ENCODE measurements at regions of chr1 and their contacts with region 1.

Region 1: DNA sequence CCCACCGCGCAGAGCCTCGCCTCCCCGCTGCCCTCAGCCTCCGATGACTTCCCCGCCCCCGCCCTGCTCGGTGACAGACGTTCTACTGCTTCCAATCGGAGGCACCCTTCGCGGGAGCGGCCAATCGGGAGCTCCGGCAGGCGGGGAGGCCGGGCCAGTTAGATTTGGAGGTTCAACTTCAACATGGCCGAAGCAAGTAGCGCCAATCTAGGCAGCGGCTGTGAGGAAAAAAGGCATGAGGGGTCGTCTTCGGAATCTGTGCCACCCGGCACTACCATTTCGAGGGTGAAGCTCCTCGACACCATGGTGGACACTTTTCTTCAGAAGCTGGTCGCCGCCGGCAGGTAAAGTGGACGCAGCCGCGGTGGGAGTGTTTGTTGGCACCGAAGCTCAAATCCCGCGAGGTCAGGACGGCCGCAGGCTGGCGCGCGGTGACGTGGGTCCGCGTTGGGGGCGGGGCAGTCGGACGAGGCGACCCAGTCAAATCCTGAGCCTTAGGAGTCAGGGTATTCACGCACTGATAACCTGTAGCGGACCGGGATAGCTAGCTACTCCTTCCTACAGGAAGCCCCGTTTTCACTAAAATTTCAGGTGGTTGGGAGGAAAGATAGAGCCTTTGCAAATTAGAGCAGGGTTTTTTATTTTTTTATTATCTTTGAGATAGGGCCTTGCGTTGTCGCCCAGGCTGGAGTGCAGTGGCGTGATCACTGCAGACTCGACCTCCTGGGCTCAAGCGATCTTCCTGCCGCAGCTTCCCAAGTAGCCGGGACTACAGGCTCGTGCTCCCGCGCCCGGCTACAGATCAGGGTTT is at the start of gene PMF1:
- DNase-seq: peak; percentile 96
- H3K4me3 ChIP-seq: peak within 1 kb of the TSS; percentile 78
- H3K27ac ChIP-seq: peak within 1 kb of the TSS; percentile 74
- H3K4me1 ChIP-seq: peaks cover 16% of the 10 kb centered on the region
- CTCF ChIP-seq: no peak
- total RNA-seq, gene PMF1: 82.5 and 88.3 TPM in 2 replicates

Region 2: DNA sequence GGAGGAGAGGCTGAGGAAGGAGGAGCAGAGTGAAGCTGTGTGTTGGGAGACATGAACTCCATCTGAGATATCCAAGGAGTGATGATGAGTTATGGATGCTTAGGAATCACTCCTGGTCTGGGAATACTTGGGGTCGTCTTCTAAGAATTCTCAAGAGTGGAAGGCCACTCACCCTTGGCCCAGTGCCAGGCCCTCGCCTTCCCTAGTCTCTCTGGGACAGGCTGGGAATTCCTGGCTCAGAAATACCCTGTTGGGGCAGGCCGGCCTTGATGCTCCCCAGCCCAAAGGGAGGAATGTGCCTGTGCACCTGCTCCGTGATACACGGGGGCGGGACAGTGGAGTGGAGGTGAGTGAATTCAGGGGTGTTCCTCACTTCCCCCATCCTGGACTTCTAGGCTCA is 111.2 kb before region 1 on chr1:
- CTCF ChIA-PET with region 1: no interaction called
- POLR2A ChIA-PET with region 1: interaction called, 11 read pairs
- intact Hi-C with region 1: no loop called
- DNase-seq: no peak
- H3K4me3 ChIP-seq: no peak overlapping the region
- H3K27ac ChIP-seq: no peak overlapping the region
- H3K4me1 ChIP-seq: peaks cover 15% of the 10 kb centered on the region
- CTCF ChIP-seq: no peak

Region 3: GRCh38 chr1:156154317-156154749 is 58.7 kb before region 1 on chr1:
- CTCF ChIA-PET with region 1: interaction called, 3 read pairs
- POLR2A ChIA-PET with region 1: interaction called, 9 read pairs
- intact Hi-C with region 1: loop called (anchors 2 kb)
- DNase-seq: peak; percentile 88
- H3K4me3 ChIP-seq: peak overlapping the region; percentile 78
- H3K27ac ChIP-seq: peak overlapping the region; percentile 95
- H3K4me1 ChIP-seq: peaks cover 77% of the 10 kb centered on the region
- CTCF ChIP-seq: no peak

Region 4: DNA sequence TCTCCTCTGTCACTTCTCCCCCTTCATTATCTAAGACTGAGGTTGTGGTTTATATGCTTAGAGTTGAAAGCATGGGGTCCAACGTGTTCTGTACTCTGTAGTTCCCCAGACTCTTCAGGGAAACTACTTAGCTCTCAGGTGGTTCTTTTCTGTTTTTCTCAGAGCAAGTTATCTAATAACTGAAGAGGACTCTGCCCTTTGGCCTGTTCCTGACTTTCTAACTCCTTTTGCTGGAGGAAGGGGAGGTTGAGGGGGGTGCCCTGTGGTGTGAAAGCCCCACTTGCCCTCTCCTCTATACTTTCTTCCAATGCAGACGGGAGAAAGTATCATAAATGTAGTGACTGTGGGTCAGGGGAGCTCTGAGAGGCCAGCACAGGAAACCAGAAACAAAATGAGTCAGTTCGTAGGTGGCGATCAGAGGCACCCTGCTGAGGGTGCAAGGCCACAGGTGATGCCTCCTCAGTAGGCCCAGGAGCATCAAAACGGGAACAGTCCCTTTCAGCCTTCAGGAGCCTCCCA is 14.1 kb before region 1 on chr1:
- CTCF ChIA-PET with region 1: interaction called, 4 read pairs
- POLR2A ChIA-PET with region 1: interaction called, 12 read pairs
- intact Hi-C with region 1: no loop called
- DNase-seq: no peak
- H3K4me3 ChIP-seq: no peak overlapping the region
- H3K27ac ChIP-seq: no peak overlapping the region
- H3K4me1 ChIP-seq: peaks cover 17% of the 10 kb centered on the region
- CTCF ChIP-seq: no peak

Region 5: GRCh38 chr1:156295391-156295947 is 82.4 kb after region 1 on chr1 and contains the start of gene GLMP:
- CTCF ChIA-PET with region 1: no interaction called
- POLR2A ChIA-PET with region 1: no interaction called
- intact Hi-C with region 1: no loop called
- DNase-seq: no peak
- H3K4me3 ChIP-seq: no peak within 1 kb of the TSS
- H3K27ac ChIP-seq: no peak within 1 kb of the TSS
- H3K4me1 ChIP-seq: no peaks in the 10 kb centered on the region
- CTCF ChIP-seq: no peak
- total RNA-seq, gene GLMP: 0.60 TPM in 1 of 2 replicates, not detected in the other

Region 6: DNA sequence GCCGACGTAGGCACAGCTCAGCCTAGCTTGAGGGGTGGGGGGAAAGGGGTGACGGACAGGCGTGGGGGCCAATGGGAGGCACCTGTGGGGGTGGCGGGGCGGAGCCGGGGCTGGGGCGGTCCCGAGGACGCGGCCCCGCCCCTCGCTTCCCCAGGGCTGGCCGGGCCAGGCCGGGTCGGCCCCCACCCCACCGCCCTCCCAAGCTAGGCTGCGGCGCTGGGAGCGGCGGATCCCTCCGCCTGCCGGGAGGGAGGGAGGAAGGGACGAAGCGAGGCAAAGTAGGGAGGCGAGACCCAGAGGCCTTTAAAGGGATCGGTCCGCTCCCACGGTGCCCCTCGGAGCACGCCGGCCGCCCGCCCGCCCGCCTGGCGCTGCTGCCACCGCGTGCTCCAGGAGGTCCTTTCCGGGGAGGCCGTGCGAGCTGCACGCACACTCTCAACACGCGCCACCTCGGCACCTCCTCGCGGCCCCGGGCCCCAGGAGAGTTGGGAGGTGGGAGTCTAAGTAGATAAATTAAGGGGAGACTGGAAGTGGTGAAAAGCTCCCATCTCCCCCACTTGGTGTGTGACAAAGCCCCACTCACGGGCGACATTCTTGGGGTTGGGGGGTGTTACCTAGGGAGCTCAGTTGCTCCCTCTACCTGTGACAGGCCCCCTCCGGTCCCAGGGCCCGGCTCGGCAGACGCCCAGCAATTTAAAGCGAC is 287.9 kb after region 1 on chr1:
- CTCF ChIA-PET with region 1: no interaction called
- POLR2A ChIA-PET with region 1: no interaction called
- intact Hi-C with region 1: no loop called
- DNase-seq: peak; percentile 94
- H3K4me3 ChIP-seq: peak overlapping the region; percentile 98
- H3K27ac ChIP-seq: peak overlapping the region; percentile 98
- H3K4me1 ChIP-seq: peaks cover 66% of the 10 kb centered on the region
- CTCF ChIP-seq: peak; percentile 82

Measured in OCI-LY7 (cell line).